Sigmoid colon (tissue), 7 donors: ENCODE measurements at regions of chr19 and their contacts with region 1.

Region 1: GRCh38 chr19:5803752-5804515 is 933 bp upstream of the NRTN start:
- DNase-seq: peak; percentile 95
- H3K4me3 ChIP-seq: peak overlapping the region; percentile 15 to 68 (median 66)
- H3K27ac ChIP-seq: peak overlapping the region; percentile 77 to 90 (median 84)
- H3K4me1 ChIP-seq: peaks cover 0 to 30% (median 25%) of the 10 kb centered on the region in 4 donors
- H3K27me3 ChIP-seq: peaks cover 0 to 29% (median 18%) of the 10 kb centered on the region in 3 donors
- CTCF ChIP-seq: peak; percentile 92 to 97 (median 96)
- EP300 ChIP-seq: no peak
- POLR2A ChIP-seq: no peak

Region 2: GRCh38 chr19:5452594-5453565 is 351.1 kb before region 1 on chr19:
- intact Hi-C with region 1: no loop called
- DNase-seq: no peak
- H3K4me3 ChIP-seq: no peak overlapping the region
- H3K27ac ChIP-seq: no peak overlapping the region
- H3K4me1 ChIP-seq: no peaks in the 10 kb centered on the region
- H3K27me3 ChIP-seq: peaks cover 0 to 45% (median 29%) of the 10 kb centered on the region in 3 donors
- CTCF ChIP-seq: no peak
- EP300 ChIP-seq: no peak
- POLR2A ChIP-seq: no peak

Region 3: GRCh38 chr19:5827891-5828660 is 24.1 kb after region 1 on chr19:
- intact Hi-C with region 1: loop called (anchors 1 kb)
- DNase-seq: peak; percentile 96
- H3K4me3 ChIP-seq: peak overlapping the region; percentile 38 to 57 (median 48)
- H3K27ac ChIP-seq: peak overlapping the region; percentile 87 to 96 (median 92)
- H3K4me1 ChIP-seq: peaks cover 0 to 35% (median 33%) of the 10 kb centered on the region in 4 donors
- H3K27me3 ChIP-seq: peaks cover 0 to 5% (median 0%) of the 10 kb centered on the region in 3 donors
- CTCF ChIP-seq: no peak
- EP300 ChIP-seq: peak in 1 of 4 donors; percentile 53
- POLR2A ChIP-seq: peak; percentile 80 to 95

Region 4: DNA sequence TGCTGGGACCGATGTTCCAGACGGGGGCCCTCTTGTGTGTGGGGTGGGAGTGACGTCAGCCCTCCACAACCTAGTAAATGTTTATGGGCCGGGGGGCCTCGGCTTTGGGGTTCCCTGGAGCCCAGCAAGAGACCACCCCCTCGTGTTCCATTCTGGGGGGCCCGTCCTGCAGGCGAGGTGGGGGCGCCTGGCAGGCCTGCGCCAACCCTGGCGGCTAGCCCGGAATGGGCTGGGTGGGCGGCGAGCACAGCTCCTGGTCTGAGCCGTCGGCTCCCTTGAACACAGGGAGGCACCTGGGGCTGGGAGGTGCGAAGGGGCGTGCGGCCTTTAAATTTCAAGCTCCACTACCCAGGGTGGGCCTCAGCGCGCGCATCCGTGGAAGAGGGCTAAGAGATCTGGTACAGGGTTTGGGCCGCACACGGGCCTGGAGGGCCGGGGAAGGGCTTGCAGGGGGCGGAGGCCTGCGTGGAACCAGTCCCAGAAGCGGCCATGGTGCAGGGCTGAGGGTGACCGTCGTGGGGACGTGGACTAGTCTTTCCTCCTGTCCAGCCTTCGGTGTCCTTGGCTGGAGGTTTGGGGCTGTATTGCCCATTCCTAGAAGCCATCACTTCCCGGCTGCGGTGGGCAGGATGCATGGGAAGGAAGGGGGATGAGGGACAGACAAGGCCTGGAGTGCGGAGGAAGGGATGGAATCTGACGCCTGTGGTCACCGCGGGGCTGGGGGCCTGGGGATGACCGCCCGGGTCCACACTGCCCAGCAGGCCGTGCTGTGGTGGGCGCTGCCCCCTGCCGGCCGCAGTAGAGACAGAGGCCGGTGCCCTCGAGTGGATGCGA is 88.2 kb after region 1 on chr19:
- intact Hi-C with region 1: loop called (anchors 1 kb)
- DNase-seq: no peak
- H3K4me3 ChIP-seq: peak overlapping the region in 1 of 4 donors; percentile 5
- H3K27ac ChIP-seq: peak overlapping the region in 2 of 4 donors; percentile 83 to 87
- H3K4me1 ChIP-seq: peaks cover 0 to 38% (median 35%) of the 10 kb centered on the region in 4 donors
- H3K27me3 ChIP-seq: no peaks in the 10 kb centered on the region
- CTCF ChIP-seq: peak; percentile 81 to 93 (median 86)
- EP300 ChIP-seq: no peak
- POLR2A ChIP-seq: no peak

Region 5: GRCh38 chr19:5967994-5968430 is 164.1 kb after region 1 on chr19:
- intact Hi-C with region 1: loop called (anchors 5 kb)
- DNase-seq: peak; percentile 85
- H3K4me3 ChIP-seq: no peak overlapping the region
- H3K27ac ChIP-seq: peak overlapping the region; percentile 71 to 89 (median 84)
- H3K4me1 ChIP-seq: peaks cover 0 to 82% (median 71%) of the 10 kb centered on the region in 4 donors
- H3K27me3 ChIP-seq: no peaks in the 10 kb centered on the region
- CTCF ChIP-seq: peak; percentile 72 to 88 (median 87)
- EP300 ChIP-seq: no peak
- POLR2A ChIP-seq: no peak

Region 6: GRCh38 chr19:6021878-6022569 is 218.1 kb after region 1 on chr19:
- intact Hi-C with region 1: loop called (anchors 2 kb)
- DNase-seq: peak; percentile 85
- H3K4me3 ChIP-seq: no peak overlapping the region
- H3K27ac ChIP-seq: peak overlapping the region in 1 of 4 donors; percentile 65
- H3K4me1 ChIP-seq: peaks cover 0 to 7% (median 2%) of the 10 kb centered on the region in 4 donors
- H3K27me3 ChIP-seq: no peaks in the 10 kb centered on the region
- CTCF ChIP-seq: peak; percentile 58 to 67 (median 64)
- EP300 ChIP-seq: no peak
- POLR2A ChIP-seq: no peak

Region 7: GRCh38 chr19:6125571-6125989 is 321.6 kb after region 1 on chr19:
- intact Hi-C with region 1: loop called (anchors 10 kb)
- DNase-seq: peak; percentile 81
- H3K4me3 ChIP-seq: no peak overlapping the region
- H3K27ac ChIP-seq: no peak overlapping the region
- H3K4me1 ChIP-seq: no peaks in the 10 kb centered on the region
- H3K27me3 ChIP-seq: no peaks in the 10 kb centered on the region
- CTCF ChIP-seq: peak; percentile 84 to 96 (median 95)
- EP300 ChIP-seq: no peak
- POLR2A ChIP-seq: no peak

Region 8: GRCh38 chr19:6150289-6150688 is 346.4 kb after region 1 on chr19:
- intact Hi-C with region 1: no loop called
- DNase-seq: no peak
- H3K4me3 ChIP-seq: no peak overlapping the region
- H3K27ac ChIP-seq: peak overlapping the region in 2 of 4 donors; percentile 45 to 47
- H3K4me1 ChIP-seq: no peaks in the 10 kb centered on the region
- H3K27me3 ChIP-seq: no peaks in the 10 kb centered on the region
- CTCF ChIP-seq: no peak
- EP300 ChIP-seq: no peak
- POLR2A ChIP-seq: no peak